Activated CD4-positive, alpha-beta T cell treated with anti-CD3 and anti-CD28 coated beads for 36 hours (primary cell): ENCODE measurements at regions of chr17 and their contacts with region 1.

Region 1: DNA sequence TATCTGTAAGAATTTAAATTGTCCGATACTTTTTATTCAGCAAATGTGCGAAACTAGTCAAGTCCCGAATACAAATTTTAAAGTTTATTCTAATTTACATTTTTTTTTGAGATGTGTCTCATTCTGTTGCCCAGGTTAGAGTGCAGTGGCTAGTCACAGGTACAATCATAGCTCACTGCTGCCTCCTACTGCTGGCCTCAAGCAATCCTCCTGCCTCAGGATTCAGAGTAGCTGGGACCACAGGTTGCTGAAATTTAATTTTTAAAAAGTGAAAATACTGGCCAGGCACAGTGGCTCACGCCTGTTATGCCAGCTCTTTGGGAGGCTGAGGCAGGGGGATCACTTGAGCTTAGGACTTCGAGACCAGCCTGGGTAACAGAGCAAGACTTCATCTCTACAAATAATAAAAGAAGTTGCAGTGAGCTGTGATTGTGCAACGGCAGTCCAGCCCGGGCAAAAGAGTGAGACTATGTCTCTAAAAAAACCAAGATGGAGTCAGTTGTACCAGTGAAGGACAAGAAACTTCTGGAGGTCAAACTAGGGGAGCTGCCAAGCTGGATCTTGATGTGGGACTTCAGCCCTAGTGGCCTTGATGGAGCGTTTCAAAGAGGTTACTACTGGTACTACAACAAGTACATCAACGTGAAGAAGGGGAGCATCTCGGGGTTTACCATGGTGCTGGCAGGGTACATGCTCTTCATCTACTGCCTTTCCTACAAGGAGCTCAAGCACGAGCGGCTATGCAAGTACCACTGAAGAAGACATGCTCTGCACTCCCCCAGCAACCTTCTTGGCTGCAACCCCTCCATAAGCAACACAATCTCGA is 5.6 kb downstream of the POLG2 start:
- DNase-seq: peak; percentile 78
- ATAC-seq: peak; percentile 84
- H3K4me3 Mint-ChIP-seq: no peak overlapping the region
- H3K27ac Mint-ChIP-seq: no peak overlapping the region
- H3K4me1 Mint-ChIP-seq: peaks cover 28% of the 10 kb centered on the region
- H3K27me3 Mint-ChIP-seq: no peaks in the 10 kb centered on the region

Region 2: DNA sequence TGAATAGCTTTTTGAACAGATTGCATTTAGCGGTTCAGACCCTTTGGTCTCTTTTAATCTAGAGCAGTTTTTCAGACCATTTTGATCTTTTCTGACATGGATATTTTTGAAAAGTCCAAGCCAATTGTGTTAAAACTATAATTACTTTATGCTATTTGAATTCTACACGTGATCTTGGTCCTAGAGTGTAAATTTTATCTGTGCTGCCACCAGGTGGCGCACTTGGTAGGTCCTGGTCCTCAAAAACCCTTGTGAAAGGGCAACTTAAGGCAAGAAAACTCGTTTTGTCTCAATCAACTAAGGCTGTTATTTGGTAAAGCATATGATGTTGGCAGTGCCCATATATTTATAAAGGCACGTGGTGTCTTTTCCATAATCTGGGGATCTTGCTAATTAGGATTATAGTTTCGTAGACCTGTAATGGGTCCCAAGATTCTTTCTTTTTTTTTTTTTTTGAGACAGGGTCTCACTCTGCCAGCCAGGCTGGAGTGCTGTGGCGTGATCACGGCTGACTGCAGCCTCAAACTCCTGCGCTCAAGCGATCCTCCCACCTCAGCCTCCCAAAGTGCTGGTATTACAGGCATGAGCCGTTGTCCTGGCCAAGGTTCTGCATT is 184.3 kb before region 1 on chr17:
- CTCF ChIA-PET with region 1: interaction called, 6 read pairs
- POLR2A ChIA-PET with region 1: no interaction called
- intact Hi-C with region 1: loop called in 1 of 2 experiments (anchors 5 kb)
- DNase-seq: peak; percentile 83
- ATAC-seq: peak; percentile 66
- H3K4me3 Mint-ChIP-seq: no peak overlapping the region
- H3K27ac Mint-ChIP-seq: no peak overlapping the region
- H3K4me1 Mint-ChIP-seq: peaks cover 6% of the 10 kb centered on the region
- H3K27me3 Mint-ChIP-seq: no peaks in the 10 kb centered on the region

Region 3: DNA sequence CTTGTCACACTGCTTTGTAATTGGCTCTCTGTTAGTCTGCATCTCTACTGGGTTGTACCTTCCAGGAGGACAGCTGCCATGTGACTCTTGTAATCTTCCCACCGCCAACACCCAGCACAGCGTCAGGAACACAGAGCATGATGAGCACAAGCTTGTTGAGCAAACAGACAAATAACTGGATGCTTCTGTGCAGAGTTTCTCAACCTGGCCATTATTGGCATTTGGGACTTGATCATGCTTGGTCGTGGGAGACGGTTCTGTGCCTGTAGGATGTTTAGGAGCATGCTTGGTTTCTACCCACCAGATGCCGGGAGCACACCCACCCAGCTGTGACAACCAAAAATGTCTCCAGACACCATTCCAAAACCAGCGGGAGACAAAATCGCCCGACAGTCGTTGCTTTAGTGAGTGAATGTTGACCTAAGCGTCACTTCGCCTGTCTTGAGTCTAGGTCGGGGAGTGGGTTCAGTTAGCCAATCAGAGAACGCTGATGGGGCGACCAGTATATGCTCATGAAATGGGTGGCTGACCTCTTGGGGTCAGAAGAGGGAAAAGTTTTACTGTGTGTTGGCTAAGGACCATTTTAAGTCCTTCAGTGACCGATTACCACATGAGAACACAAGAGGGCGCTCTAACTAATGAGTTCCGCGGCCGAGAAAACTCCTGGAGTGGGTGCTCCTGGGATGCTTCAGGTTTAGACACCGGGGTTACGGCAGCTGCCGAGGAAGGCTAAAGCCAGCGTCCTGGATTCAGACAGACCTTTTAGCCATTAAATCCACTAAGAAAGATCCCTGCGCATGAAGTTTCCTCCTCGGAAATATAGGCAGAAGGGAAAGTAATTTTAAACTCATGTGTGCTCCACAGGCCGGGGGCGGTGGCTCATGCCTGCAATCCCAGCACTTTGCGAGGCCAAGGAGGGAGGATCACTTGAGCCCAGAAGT is 170.4 kb before region 1 on chr17:
- CTCF ChIA-PET with region 1: no interaction called
- POLR2A ChIA-PET with region 1: no interaction called
- intact Hi-C with region 1: loop called in 1 of 2 experiments (anchors 5 kb)
- DNase-seq: peak; percentile 68
- ATAC-seq: peak; percentile 64
- H3K4me3 Mint-ChIP-seq: no peak overlapping the region
- H3K27ac Mint-ChIP-seq: no peak overlapping the region
- H3K4me1 Mint-ChIP-seq: peaks cover 6% of the 10 kb centered on the region
- H3K27me3 Mint-ChIP-seq: no peaks in the 10 kb centered on the region

Region 4: DNA sequence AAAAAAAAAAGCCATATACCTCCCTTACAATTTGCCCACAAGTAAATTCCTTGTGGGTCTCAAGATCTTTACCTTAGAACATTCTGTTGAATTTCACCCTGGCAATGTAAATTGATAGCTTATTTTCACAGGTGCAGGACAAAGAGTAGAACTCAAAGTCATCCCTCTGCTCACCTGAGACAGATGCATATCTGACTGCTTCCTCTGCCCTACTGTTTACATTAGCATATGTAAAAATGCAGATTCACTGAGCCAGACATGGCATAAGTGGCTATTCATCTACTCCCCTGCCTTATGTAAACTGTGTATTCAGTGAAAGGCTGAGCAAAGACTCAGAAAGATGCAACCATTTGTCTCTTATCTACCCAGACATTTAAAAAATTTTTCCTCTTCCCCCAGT is 64.7 kb before region 1 on chr17:
- CTCF ChIA-PET with region 1: interaction called, 145 read pairs
- POLR2A ChIA-PET with region 1: no interaction called
- intact Hi-C with region 1: no loop called
- DNase-seq: no peak
- ATAC-seq: no peak
- H3K4me3 Mint-ChIP-seq: no peak overlapping the region
- H3K27ac Mint-ChIP-seq: no peak overlapping the region
- H3K4me1 Mint-ChIP-seq: no peaks in the 10 kb centered on the region
- H3K27me3 Mint-ChIP-seq: no peaks in the 10 kb centered on the region

Region 5: GRCh38 chr17:64479650-64480049 is 11.6 kb before region 1 on chr17:
- CTCF ChIA-PET with region 1: interaction called, 58 read pairs
- POLR2A ChIA-PET with region 1: no interaction called
- intact Hi-C with region 1: no loop called
- DNase-seq: no peak
- ATAC-seq: no peak
- H3K4me3 Mint-ChIP-seq: no peak overlapping the region
- H3K27ac Mint-ChIP-seq: no peak overlapping the region
- H3K4me1 Mint-ChIP-seq: peaks cover 4% of the 10 kb centered on the region
- H3K27me3 Mint-ChIP-seq: no peaks in the 10 kb centered on the region

Region 6: GRCh38 chr17:64648234-64648633 is 157.0 kb after region 1 on chr17:
- CTCF ChIA-PET with region 1: interaction called, 13 read pairs
- POLR2A ChIA-PET with region 1: no interaction called
- intact Hi-C with region 1: loop called in 1 of 2 experiments (anchors 2 kb)
- DNase-seq: no peak
- ATAC-seq: no peak
- H3K4me3 Mint-ChIP-seq: no peak overlapping the region
- H3K27ac Mint-ChIP-seq: peak overlapping the region; percentile 89
- H3K4me1 Mint-ChIP-seq: peaks cover 37% of the 10 kb centered on the region
- H3K27me3 Mint-ChIP-seq: no peaks in the 10 kb centered on the region